ENCODE measurements at regions of chr9 and their contacts with region 1.

Region 1: DNA sequence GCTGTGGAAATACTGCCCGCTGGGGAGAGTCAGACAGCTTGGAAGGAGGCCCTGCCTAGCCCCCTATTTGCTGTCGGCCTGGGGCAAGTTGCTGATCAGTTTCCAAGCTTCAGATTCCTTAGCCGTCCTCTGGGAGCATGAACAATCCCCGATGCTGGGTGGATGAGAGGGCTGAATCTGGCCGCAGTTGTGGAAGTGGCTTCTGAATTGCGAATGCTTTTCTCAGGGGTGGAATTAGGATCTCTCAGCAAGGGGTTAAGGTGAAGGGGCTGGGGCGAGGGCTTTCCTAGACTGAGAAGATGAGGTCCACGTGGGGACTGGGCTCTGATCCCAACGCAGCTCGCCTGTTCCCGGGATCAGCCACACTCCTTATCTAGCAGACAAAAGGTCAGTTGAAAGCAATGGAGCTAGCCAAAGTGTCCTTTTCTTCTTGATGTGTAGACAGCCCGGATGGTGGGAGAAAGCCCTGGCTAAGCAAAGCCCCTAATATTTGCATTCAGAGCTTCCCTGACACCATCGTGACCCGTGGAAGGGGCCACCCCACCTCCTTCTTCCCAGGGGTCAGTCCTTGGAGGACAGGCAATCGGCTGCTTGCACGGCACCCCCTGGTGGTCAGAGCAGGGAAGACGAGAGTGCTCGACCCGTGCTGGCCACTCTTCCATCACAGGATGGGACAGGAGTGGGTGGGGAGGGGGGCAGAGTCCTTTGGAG is 54.9 kb downstream of the COL15A1 start:
- DNase-seq: peak; percentile 93
- ATAC-seq: peak; percentile 90

Region 2: DNA sequence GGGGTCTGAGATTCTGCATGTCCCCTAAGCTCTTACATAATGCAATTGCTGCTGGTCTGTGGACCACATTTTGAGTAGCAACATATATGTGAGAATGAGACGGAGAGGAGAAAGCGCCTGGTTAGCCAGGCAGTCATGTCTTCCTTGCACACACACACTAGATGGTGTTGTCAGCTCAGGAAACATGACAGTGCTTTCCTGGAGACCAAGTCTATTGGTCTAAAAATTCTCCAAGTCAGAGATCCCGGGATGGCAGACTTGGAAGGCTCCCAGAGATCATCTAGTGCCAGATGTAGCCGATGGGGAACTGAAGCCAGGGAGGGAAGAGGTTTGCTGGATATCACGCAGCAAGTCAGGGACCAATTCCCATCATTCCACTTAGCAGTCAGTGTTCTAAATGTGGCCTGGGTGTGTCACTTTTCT is 137.7 kb before region 1 on chr9:
- intact Hi-C with region 1: loop called (anchors 5 kb)
- DNase-seq: peak; percentile 75
- ATAC-seq: peak; percentile 75

Region 3: DNA sequence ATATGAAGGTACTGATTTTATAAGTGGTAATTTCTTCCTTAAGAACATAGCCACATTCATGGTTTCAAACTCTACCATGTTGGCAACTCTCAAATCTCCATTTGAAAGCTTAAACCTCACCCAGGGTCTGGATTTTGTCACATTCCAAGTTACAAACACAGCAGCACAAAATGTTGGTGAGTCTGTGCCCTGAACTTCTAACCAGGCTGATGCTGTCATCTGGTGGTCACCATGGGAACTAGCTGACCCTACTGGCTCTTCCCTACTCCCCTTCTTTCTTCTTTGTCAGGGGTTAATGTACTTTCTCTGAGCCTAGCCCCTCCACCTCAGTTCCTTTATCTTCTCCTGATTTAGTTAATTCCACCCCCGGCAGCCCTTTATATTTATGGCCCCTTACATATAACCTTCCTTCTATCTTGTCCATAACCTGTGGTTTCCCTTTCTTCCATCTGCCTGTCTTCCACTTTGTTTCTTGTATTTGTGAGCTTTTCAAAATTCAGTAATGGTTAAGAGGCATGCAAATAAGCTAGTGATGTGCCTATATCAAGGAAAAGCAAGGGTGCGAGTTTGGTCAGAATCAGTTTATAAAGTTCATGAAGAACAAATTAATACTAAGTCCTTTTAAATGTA is 142.2 kb after region 1 on chr9:
- intact Hi-C with region 1: loop called (anchors 10 kb)
- DNase-seq: no peak
- ATAC-seq: peak; percentile 87

Measured in sciatic nerve (tissue), 2 donors.